Naive thymus-derived CD8-positive, alpha-beta T cell (primary cell): ENCODE measurements at regions of chrX and their contacts with region 1.

Region 1: GRCh38 chrX:40153335-40154249 is 55.8 kb upstream of the BCOR start:
- DNase-seq: peak in 7 of 10 donors; percentile 53 to 75 (median 56)
- ATAC-seq: peak; percentile 56 to 69
- H3K4me3 Mint-ChIP-seq: peak overlapping the region; percentile 76 to 91 (median 83)
- H3K27ac Mint-ChIP-seq: peak overlapping the region in 6 of 10 donors; percentile 44 to 89 (median 63)
- H3K4me1 Mint-ChIP-seq: peaks cover 4 to 33% (median 9%) of the 10 kb centered on the region in 4 donors
- H3K27me3 Mint-ChIP-seq: no peaks in the 10 kb centered on the region

Region 2: GRCh38 chrX:40169193-40170101 is 15.9 kb after region 1 on chrX:
- POLR2A ChIA-PET with region 1: interaction called, 208 read pairs
- DNase-seq: peak in 9 of 10 donors; percentile 54 to 90 (median 76)
- ATAC-seq: peak; percentile 55 to 68
- H3K4me3 Mint-ChIP-seq: peak overlapping the region; percentile 85 to 94 (median 90)
- H3K27ac Mint-ChIP-seq: peak overlapping the region; percentile 96 to 99 (median 99)
- H3K4me1 Mint-ChIP-seq: peaks cover 16 to 58% (median 50%) of the 10 kb centered on the region in 4 donors
- H3K27me3 Mint-ChIP-seq: no peaks in the 10 kb centered on the region

Region 3: GRCh38 chrX:40237731-40238178 is 84.2 kb after region 1 on chrX:
- POLR2A ChIA-PET with region 1: no interaction called
- DNase-seq: no peak
- ATAC-seq: no peak
- H3K4me3 Mint-ChIP-seq: peak overlapping the region in 3 of 10 donors; percentile 7 to 51 (median 27)
- H3K27ac Mint-ChIP-seq: no peak overlapping the region
- H3K4me1 Mint-ChIP-seq: peaks cover 0 to 6% (median 2%) of the 10 kb centered on the region in 4 donors
- H3K27me3 Mint-ChIP-seq: peaks cover 0 to 2% (median 0%) of the 10 kb centered on the region in 5 donors

Region 4: GRCh38 chrX:40552768-40553167 is 399.2 kb after region 1 on chrX:
- POLR2A ChIA-PET with region 1: no interaction called
- DNase-seq: no peak
- ATAC-seq: no peak
- H3K4me3 Mint-ChIP-seq: no peak overlapping the region
- H3K27ac Mint-ChIP-seq: no peak overlapping the region
- H3K4me1 Mint-ChIP-seq: peaks cover 0 to 1% (median 0%) of the 10 kb centered on the region in 4 donors
- H3K27me3 Mint-ChIP-seq: no peaks in the 10 kb centered on the region